ENCODE measurements at regions of chr22 and their contacts with region 1.

Region 1: GRCh38 chr22:43707648-43708047 is 104.5 kb downstream of the EFCAB6 start:
- DNase-seq: no peak
- ATAC-seq: no peak
- H3K4me3 ChIP-seq: no peak overlapping the region
- H3K4me3 Mint-ChIP-seq: no peak overlapping the region
- H3K27ac ChIP-seq: no peak overlapping the region
- H3K27ac Mint-ChIP-seq: no peak overlapping the region
- H3K4me1 ChIP-seq: no peaks in the 10 kb centered on the region
- H3K4me1 Mint-ChIP-seq: no peaks in the 10 kb centered on the region
- H3K27me3 ChIP-seq: no peaks in the 10 kb centered on the region
- H3K27me3 Mint-ChIP-seq: peaks cover 8% of the 10 kb centered on the region
- CTCF ChIP-seq: no peak

Region 2: GRCh38 chr22:42500161-42500835 is 1207.3 kb before region 1 on chr22:
- CTCF ChIA-PET with region 1: no interaction called
- POLR2A ChIA-PET with region 1: no interaction called
- intact Hi-C with region 1: no loop called
- DNase-seq: peak; percentile 67 to 91 (median 82)
- ATAC-seq: peak; percentile 94
- H3K4me3 ChIP-seq: peak overlapping the region; percentile 42 to 48
- H3K4me3 Mint-ChIP-seq: peak overlapping the region; percentile 72
- H3K27ac ChIP-seq: no peak overlapping the region
- H3K27ac Mint-ChIP-seq: no peak overlapping the region
- H3K4me1 ChIP-seq: peaks cover 7% of the 10 kb centered on the region
- H3K4me1 Mint-ChIP-seq: peaks cover 4% of the 10 kb centered on the region
- H3K27me3 ChIP-seq: no peaks in the 10 kb centered on the region
- H3K27me3 Mint-ChIP-seq: no peaks in the 10 kb centered on the region
- CTCF ChIP-seq: no peak

Region 3: GRCh38 chr22:43643387-43643786 is 64.3 kb before region 1 on chr22:
- CTCF ChIA-PET with region 1: no interaction called
- POLR2A ChIA-PET with region 1: no interaction called
- intact Hi-C with region 1: loop called in 1 of 2 experiments (anchors 2 kb)
- DNase-seq: no peak
- ATAC-seq: no peak
- H3K4me3 ChIP-seq: no peak overlapping the region
- H3K4me3 Mint-ChIP-seq: no peak overlapping the region
- H3K27ac ChIP-seq: no peak overlapping the region
- H3K27ac Mint-ChIP-seq: no peak overlapping the region
- H3K4me1 ChIP-seq: no peaks in the 10 kb centered on the region
- H3K4me1 Mint-ChIP-seq: no peaks in the 10 kb centered on the region
- H3K27me3 ChIP-seq: no peaks in the 10 kb centered on the region
- H3K27me3 Mint-ChIP-seq: peaks cover 19% of the 10 kb centered on the region
- CTCF ChIP-seq: no peak

Region 4: DNA sequence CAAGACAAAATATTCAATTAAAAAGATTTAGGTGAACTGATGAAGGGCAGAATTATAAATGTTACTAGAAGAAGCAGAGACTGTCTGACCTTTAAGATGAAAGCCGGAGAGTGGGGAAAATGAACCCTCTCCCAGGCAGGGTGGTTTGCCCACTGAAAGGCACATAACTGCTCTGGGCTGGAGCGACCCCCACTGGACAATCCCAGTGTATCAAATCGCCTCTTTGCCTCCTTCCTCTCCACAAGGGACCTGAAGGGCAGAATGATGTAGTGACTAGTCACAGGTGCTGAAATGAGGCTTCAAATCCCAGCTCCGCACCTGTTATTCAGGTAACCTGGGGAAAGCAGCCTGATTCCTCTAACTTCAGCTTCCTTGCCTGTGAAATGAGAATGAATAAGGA is 35.5 kb after region 1 on chr22:
- CTCF ChIA-PET with region 1: no interaction called
- POLR2A ChIA-PET with region 1: no interaction called
- intact Hi-C with region 1: no loop called
- DNase-seq: no peak
- ATAC-seq: no peak
- H3K4me3 ChIP-seq: no peak overlapping the region
- H3K4me3 Mint-ChIP-seq: no peak overlapping the region
- H3K27ac ChIP-seq: no peak overlapping the region
- H3K27ac Mint-ChIP-seq: no peak overlapping the region
- H3K4me1 ChIP-seq: no peaks in the 10 kb centered on the region
- H3K4me1 Mint-ChIP-seq: no peaks in the 10 kb centered on the region
- H3K27me3 ChIP-seq: peaks cover 0 to 3% of the 10 kb centered on the region in 2 experiments
- H3K27me3 Mint-ChIP-seq: peaks cover 9% of the 10 kb centered on the region
- CTCF ChIP-seq: no peak

Measured in CD8-positive, alpha-beta T cell (primary cell).